ENCODE measurements at regions of chr12 and their contacts with region 1.

Region 1: DNA sequence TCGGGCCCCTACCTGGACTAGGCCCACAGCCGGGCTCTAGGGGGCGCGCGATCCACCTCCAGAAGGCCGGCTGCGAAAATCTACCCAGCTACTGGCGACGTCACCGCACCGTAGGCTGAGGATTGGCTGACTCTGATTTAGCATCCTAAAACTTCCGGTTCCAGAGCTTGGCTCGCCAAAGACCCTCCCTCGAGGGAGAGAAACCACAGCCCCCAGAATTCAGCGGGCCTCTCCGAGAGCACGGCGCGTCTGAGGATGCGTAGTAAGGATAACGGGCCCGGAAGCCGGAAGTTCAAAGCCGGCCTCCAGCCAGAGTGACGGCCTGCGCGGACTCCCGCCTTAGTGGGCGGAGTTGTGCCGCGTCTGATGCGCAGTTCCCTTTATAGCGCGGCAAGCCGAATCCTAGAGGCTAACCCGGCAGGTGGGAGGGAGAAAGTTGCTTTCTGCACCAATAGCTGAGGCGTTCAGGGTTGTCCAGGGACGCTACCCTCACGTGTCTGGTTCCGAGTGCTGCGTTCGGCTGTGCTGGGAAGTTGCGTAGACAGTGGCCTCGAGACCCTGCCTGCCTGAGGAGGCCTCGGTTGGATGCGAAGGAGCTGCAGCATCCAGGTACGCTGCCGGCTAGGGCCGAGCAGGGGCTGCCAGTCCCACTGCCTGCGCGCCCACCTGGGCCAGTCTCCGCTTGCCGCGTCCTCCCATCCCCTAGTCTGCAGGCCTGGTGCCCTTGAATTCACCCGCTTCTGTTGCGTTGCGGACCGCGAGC is at the start of gene COX14:
- DNase-seq: peak; percentile 99
- ATAC-seq: peak; percentile 87
- H3K4me3 ChIP-seq: peak within 1 kb of the TSS; percentile 99
- H3K27ac ChIP-seq: peak within 1 kb of the TSS; percentile 90
- H3K4me1 ChIP-seq: peaks cover 21% of the 10 kb centered on the region
- H3K27me3 ChIP-seq: no peaks in the 10 kb centered on the region
- CTCF ChIP-seq: peak; percentile 94
- EP300 ChIP-seq: no peak; a peak in 1 of 4 replicates
- POLR2A ChIP-seq: peak; percentile 99
- RAD21 ChIP-seq: peak; percentile 44; the same call in 1 of the 2 replicates
- polyA plus RNA-seq, gene COX14: 323 to 361 TPM

Region 2: DNA sequence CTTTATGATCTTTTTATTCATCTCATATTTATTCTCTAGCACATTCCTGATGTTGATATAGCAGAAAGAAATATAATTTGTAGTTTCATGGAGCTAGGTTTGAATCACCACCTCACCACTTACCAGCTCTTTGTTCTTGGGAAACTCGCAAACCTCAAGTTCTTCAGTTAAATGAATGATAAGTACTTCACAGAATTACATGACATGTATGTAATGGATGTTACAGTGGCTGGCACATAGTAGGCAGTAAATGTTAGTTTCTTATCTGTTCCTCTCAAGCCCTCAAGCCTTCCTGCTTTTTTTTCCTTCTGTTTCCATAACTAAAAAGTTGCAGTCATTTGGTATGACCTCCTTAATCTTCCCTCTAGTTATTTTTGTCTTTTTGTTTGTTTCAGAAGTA is 689.8 kb before region 1 on chr12:
- CTCF ChIA-PET with region 1: no interaction called
- POLR2A ChIA-PET with region 1: interaction called, 12 read pairs
- RAD21 ChIA-PET with region 1: no interaction called
- SMC1A ChIA-PET with region 1: no interaction called
- in situ Hi-C with region 1: no loop called
- intact Hi-C with region 1: no loop called
- DNase-seq: no peak
- ATAC-seq: peak; percentile 42; the same call in 2 of the 3 replicates
- H3K4me3 ChIP-seq: no peak overlapping the region
- H3K27ac ChIP-seq: peak overlapping the region; percentile 24; the same call in 1 of the 2 replicates
- H3K4me1 ChIP-seq: no peaks in the 10 kb centered on the region
- H3K27me3 ChIP-seq: no peaks in the 10 kb centered on the region
- CTCF ChIP-seq: no peak
- EP300 ChIP-seq: no peak
- POLR2A ChIP-seq: no peak
- RAD21 ChIP-seq: no peak

Region 3: DNA sequence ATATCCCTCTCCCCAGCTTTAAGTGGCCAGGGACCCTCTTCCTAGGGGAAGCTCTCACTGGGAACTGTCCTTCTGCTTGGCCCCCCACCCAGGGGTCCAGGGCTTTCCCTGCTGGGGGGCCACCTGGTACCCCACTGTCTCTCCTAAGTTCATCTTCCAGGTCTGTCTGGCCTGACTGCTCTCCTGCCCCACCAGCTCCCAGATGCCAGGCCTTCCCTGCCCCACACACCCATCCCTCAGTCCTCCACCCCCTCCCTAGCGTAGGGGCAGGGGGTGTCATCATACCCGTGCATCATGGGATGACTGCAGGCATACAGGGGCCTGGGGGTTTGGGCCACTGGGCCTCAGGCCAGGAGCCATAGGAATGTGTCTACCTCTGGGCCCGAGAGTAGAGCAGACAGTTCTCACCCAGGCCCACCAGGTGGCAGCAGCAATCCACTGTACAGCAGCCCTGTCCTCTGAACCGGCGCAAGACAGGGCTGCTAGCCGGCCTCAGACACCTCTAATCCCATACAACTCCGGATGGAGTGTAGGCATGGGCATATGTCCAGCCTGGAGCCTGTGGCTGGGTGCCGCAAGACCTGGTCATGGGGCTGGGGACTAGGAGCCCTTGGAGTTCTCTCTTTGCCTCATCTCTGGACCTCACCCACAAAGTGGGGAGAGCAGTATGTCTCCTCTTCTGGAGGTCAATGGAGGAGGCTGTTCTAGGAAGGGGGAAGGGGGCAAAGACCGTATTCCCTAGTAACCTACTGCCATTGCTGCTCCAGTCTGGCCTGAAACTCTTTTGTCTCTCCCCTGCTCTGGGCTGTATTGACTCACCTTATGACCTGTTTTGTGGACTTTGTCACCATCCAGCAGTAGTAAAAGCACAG is 36.7 kb before region 1 on chr12:
- CTCF ChIA-PET with region 1: interaction called, 19 read pairs
- POLR2A ChIA-PET with region 1: interaction called, 3 read pairs
- RAD21 ChIA-PET with region 1: interaction called, 5 read pairs
- SMC1A ChIA-PET with region 1: interaction called, 3 read pairs
- in situ Hi-C with region 1: no loop called
- intact Hi-C with region 1: no loop called
- DNase-seq: peak; percentile 37
- ATAC-seq: peak; percentile 96
- H3K4me3 ChIP-seq: no peak overlapping the region
- H3K27ac ChIP-seq: no peak overlapping the region
- H3K4me1 ChIP-seq: no peaks in the 10 kb centered on the region; the same call in 1 of the 2 replicates
- H3K27me3 ChIP-seq: no peaks in the 10 kb centered on the region; a peak in 1 of 4 replicates
- CTCF ChIP-seq: peak; percentile 91 to 98 (median 95); a peak in 5 of 6 replicates
- EP300 ChIP-seq: no peak
- POLR2A ChIP-seq: no peak
- RAD21 ChIP-seq: peak; percentile 87

Region 4: DNA sequence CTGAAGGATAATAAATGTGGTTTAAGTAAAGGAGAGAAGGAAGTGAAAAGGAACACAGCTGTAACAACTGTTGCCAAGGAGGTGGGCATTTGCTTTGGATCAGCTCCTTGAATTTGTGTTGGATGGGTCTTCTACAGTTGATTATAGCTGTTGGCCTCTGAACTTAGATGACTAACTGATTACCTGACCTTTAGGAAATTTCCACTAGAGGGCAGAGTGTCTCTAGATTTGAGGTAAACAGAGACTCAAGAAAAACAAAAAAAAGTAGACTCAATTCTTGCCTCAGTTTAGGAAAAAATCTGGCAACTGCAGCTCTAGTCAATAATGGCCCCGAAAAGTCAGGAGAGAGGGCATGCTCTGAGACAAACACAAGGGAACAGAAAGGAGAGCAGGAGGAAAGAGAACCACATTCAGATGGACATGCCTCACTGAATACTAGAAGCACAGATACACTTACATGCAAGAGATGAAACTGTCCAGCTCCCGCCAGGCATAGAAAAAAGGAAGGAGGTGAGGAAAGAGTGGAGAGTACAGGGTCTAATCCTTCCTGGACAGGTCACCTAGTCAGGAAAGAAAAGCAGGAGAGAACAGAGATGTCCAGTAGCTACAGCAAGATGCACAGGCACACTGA is 20.7 kb after region 1 on chr12:
- CTCF ChIA-PET with region 1: interaction called, 89 read pairs
- POLR2A ChIA-PET with region 1: interaction called, 15 read pairs
- RAD21 ChIA-PET with region 1: interaction called, 4 read pairs
- SMC1A ChIA-PET with region 1: interaction called, 16 read pairs
- in situ Hi-C with region 1: no loop called
- intact Hi-C with region 1: no loop called
- DNase-seq: no peak
- ATAC-seq: peak; percentile 51
- H3K4me3 ChIP-seq: no peak overlapping the region
- H3K27ac ChIP-seq: no peak overlapping the region
- H3K4me1 ChIP-seq: no peaks in the 10 kb centered on the region
- H3K27me3 ChIP-seq: no peaks in the 10 kb centered on the region
- CTCF ChIP-seq: peak; percentile 37 to 47 (median 46); a peak in 4 of 6 replicates
- EP300 ChIP-seq: no peak
- POLR2A ChIP-seq: no peak
- RAD21 ChIP-seq: peak; percentile 48

Region 5: GRCh38 chr12:50174971-50175715 is 63.3 kb after region 1 on chr12:
- CTCF ChIA-PET with region 1: interaction called, 257 read pairs
- POLR2A ChIA-PET with region 1: interaction called, 4 read pairs
- RAD21 ChIA-PET with region 1: interaction called, 29 read pairs
- SMC1A ChIA-PET with region 1: interaction called, 20 read pairs
- in situ Hi-C with region 1: no loop called
- intact Hi-C with region 1: no loop called
- DNase-seq: no peak
- ATAC-seq: peak; percentile 34; the same call in 1 of the 3 replicates
- H3K4me3 ChIP-seq: no peak overlapping the region
- H3K27ac ChIP-seq: no peak overlapping the region
- H3K4me1 ChIP-seq: no peaks in the 10 kb centered on the region
- H3K27me3 ChIP-seq: no peaks in the 10 kb centered on the region
- CTCF ChIP-seq: peak; percentile 47 to 64 (median 53); a peak in 5 of 6 replicates
- EP300 ChIP-seq: no peak
- POLR2A ChIP-seq: no peak
- RAD21 ChIP-seq: peak; percentile 73

Region 6: GRCh38 chr12:50222275-50222795 is 110.5 kb after region 1 on chr12:
- CTCF ChIA-PET with region 1: interaction called, 37 read pairs
- POLR2A ChIA-PET with region 1: interaction called, 23 read pairs
- RAD21 ChIA-PET with region 1: interaction called, 31 read pairs
- SMC1A ChIA-PET with region 1: interaction called, 15 read pairs
- in situ Hi-C with region 1: no loop called
- intact Hi-C with region 1: no loop called
- DNase-seq: no peak
- ATAC-seq: peak; percentile 41
- H3K4me3 ChIP-seq: peak overlapping the region; percentile 86
- H3K27ac ChIP-seq: peak overlapping the region; percentile 84
- H3K4me1 ChIP-seq: peaks cover 9% of the 10 kb centered on the region
- H3K27me3 ChIP-seq: no peaks in the 10 kb centered on the region
- CTCF ChIP-seq: no peak
- EP300 ChIP-seq: no peak
- POLR2A ChIP-seq: peak; percentile 56
- RAD21 ChIP-seq: 0 out of 2 replicates have a peak, but pooled peaks have one; percentile 12

Region 7: DNA sequence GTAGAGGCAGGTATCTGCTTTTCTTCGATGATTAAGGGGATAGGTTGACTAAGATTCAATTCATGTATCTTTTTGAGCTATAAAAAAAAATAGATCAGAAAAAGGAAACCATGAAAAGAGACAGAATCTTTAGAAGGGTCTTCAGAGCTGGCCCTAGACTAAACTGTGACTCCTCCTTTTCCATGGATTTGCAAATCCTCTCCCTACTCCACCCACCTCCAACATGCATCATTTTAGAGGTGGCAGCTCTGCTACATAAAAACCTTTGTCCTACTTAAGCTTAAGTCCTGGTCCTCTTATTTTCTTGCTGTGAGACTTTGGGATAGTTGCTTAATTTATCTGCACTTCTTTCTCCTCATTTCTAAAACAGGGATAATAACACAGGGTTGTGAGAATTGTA is 219.9 kb after region 1 on chr12:
- CTCF ChIA-PET with region 1: interaction called, 11 read pairs
- POLR2A ChIA-PET with region 1: no interaction called
- RAD21 ChIA-PET with region 1: no interaction called
- SMC1A ChIA-PET with region 1: interaction called, 3 read pairs
- in situ Hi-C with region 1: no loop called
- intact Hi-C with region 1: no loop called
- DNase-seq: no peak
- ATAC-seq: no peak
- H3K4me3 ChIP-seq: no peak overlapping the region
- H3K27ac ChIP-seq: no peak overlapping the region
- H3K4me1 ChIP-seq: no peaks in the 10 kb centered on the region
- H3K27me3 ChIP-seq: no peaks in the 10 kb centered on the region
- CTCF ChIP-seq: no peak
- EP300 ChIP-seq: no peak
- POLR2A ChIP-seq: no peak
- RAD21 ChIP-seq: no peak

Measured in GM12878 (cell line).